ENCODE measurements at regions of chr5 and their contacts with region 1.

Region 1: DNA sequence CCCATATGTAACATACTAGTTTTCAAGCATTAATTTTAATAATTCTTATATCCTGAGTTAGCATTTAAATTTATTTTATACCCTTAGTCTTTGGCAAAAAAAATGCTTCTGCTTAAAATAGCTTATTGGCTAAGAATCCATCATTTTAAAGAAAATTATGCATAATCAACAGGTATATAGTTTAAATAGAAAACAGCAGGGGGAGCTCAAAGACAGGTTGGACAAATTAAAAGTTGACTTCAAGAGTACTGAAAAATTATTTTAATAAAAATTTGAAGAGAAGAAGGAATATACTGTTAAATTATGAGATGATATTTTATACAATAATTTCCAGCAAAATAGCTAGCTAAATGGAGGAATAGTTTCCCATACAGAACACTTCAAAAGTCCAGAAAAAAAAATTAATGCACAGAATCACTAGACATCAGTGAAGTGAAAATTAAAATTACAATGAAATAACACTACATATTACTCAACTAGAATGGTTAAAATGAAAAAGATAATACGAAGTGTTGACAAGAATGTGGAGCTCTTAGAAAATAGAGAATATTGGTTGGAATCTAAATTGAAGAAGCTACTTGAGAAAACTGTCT is 387.1 kb downstream of the PDE4D start:
- DNase-seq: peak; percentile 50 to 77 (median 71)
- H3K4me3 ChIP-seq: no peak overlapping the region
- H3K27ac ChIP-seq: no peak overlapping the region
- H3K4me1 ChIP-seq: peaks cover 0 to 10% (median 0%) of the 10 kb centered on the region in 4 experiments
- H3K27me3 ChIP-seq: no peaks in the 10 kb centered on the region

Region 2: DNA sequence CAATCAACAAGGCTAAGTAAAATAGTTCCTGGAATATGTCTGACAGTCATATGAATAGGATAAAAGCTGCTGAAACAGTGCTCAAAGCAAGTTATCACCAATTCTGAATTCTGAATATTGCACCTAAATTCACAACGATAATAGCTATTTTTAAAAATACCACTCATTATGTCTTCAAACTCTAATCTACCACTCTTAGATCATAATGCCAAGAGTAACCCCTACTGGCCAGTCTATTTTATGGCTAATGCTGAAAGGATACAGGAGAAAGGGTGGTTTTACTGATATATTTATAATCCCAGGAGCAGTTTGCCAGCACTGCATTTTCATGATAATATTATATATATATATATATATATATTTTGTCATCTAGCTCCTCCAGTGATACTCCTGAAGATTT is 154.4 kb after region 1 on chr5:
- CTCF ChIA-PET with region 1: interaction called, 139 read pairs
- POLR2A ChIA-PET with region 1: no interaction called
- DNase-seq: peak; percentile 36 to 56 (median 54)
- H3K4me3 ChIP-seq: no peak overlapping the region
- H3K27ac ChIP-seq: no peak overlapping the region
- H3K4me1 ChIP-seq: peaks cover 21 to 56% (median 38%) of the 10 kb centered on the region in 4 experiments
- H3K27me3 ChIP-seq: no peaks in the 10 kb centered on the region

Region 3: GRCh38 chr5:59673438-59674058 is 167.2 kb after region 1 on chr5:
- CTCF ChIA-PET with region 1: interaction called, 78 read pairs
- POLR2A ChIA-PET with region 1: no interaction called
- DNase-seq: peak; percentile 38 to 70 (median 63)
- H3K4me3 ChIP-seq: no peak overlapping the region
- H3K27ac ChIP-seq: no peak overlapping the region
- H3K4me1 ChIP-seq: no peaks in the 10 kb centered on the region
- H3K27me3 ChIP-seq: no peaks in the 10 kb centered on the region

Region 4: GRCh38 chr5:59799668-59800346 is 293.4 kb after region 1 on chr5:
- CTCF ChIA-PET with region 1: interaction called, 37 read pairs
- POLR2A ChIA-PET with region 1: no interaction called
- DNase-seq: peak; percentile 55 to 70 (median 66)
- H3K4me3 ChIP-seq: peak overlapping the region in 1 of 7 experiments; percentile 55
- H3K27ac ChIP-seq: peak overlapping the region in 1 of 2 experiments; percentile 32
- H3K4me1 ChIP-seq: peaks cover 11 to 31% (median 21%) of the 10 kb centered on the region in 4 experiments
- H3K27me3 ChIP-seq: no peaks in the 10 kb centered on the region

Measured in common myeloid progenitor, CD34-positive (primary cell).